Natural killer cell (primary cell): ENCODE measurements at regions of chr1 and their contacts with region 1.

Region 1: DNA sequence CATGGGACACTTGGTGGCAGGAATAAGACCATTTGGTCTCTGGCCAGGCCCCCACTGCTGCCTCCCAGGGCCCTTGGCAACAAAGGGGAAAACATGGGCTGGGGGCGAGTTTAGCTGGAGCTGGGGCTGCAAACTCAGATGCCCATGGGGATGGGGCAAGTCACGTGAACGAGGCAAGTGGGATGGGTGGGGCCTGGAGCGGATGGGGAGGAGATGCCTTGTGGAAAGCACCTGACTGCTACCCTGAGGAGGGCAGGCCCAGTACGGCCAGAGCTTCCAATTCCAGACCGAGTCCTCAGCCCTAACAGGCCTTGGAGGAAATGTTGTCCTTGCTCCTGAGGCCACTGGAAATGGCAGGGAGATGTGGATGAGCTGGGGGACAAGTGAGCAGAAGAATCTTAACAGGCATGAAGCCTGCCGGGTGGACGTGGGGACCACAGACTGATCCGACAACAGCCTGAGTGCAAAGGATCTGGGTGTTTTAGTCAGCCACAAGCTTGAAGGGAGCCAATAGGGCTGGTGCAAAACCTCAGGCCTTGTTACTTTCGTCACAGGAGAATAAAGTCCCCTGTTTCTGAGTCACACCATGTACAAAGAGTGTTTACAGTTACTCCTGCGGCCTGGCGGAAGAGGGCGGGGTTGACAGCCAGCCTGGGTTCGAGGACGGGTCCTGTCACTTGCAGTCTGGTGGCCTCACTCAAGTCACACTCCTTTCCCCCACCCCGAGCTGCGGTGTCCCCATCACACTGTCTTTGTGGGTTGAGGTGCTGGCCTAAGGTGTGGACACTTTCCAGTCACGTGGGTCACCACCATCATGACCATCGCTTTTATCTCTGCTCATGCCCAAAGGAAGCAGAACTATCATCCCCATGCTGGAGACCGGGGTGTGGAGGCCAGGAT is 19.1 kb downstream of the RUNX3 start:
- DNase-seq: peak; percentile 94 to 95
- ATAC-seq: peak; percentile 64 to 84 (median 70)
- H3K4me3 ChIP-seq: peak overlapping the region; percentile 25
- H3K4me3 Mint-ChIP-seq: peak overlapping the region; percentile 83
- H3K27ac ChIP-seq: peak overlapping the region; percentile 100
- H3K27ac Mint-ChIP-seq: peak overlapping the region; percentile 99
- H3K4me1 ChIP-seq: peaks cover 99% of the 10 kb centered on the region
- H3K4me1 Mint-ChIP-seq: peaks cover 89 to 94% of the 10 kb centered on the region in 2 donors
- H3K27me3 ChIP-seq: no peaks in the 10 kb centered on the region
- H3K27me3 Mint-ChIP-seq: no peaks in the 10 kb centered on the region
- CTCF ChIP-seq: no peak

Region 2: DNA sequence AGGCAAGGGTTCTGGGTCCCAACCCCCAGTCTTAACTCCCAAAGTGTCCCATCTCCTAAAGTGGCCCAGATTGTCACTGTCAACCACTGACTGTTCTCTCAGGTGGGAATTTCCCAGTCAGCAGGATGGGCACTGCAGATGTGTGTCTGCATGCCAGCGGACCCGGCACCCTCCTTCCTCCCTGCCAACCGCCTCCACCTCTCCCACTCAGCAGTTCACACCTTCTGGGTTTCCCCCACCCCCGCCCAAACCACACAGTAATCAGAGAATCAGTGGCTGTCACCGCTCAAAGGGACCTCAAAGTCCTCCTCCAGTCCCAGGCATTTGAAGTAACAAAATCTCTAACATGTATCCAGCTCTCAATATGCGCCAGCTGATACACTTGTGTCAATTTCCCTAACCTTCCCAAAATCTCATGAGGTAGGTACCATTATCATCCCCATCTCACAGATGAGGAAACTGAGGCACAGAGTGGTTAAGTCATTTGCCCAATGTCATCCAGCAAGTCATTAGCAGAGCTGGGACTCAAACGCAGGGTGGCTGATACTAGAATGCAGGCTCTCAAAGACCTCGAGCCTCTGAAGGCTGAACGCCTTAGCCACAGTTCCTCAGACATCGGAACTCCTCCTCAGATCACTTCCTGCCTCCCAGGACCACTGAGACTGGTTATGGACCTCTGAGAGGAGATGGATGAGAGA is 14.2 kb after region 1 on chr1:
- intact Hi-C with region 1: loop called (anchors 1 kb)
- DNase-seq: peak; percentile 75 to 97
- ATAC-seq: peak; percentile 40 to 64 (median 61)
- H3K4me3 ChIP-seq: peak overlapping the region; percentile 94
- H3K4me3 Mint-ChIP-seq: peak overlapping the region; percentile 97
- H3K27ac ChIP-seq: peak overlapping the region; percentile 100
- H3K27ac Mint-ChIP-seq: peak overlapping the region; percentile 99
- H3K4me1 ChIP-seq: peaks cover 71% of the 10 kb centered on the region
- H3K4me1 Mint-ChIP-seq: peaks cover 66 to 73% of the 10 kb centered on the region in 2 donors
- H3K27me3 ChIP-seq: no peaks in the 10 kb centered on the region
- H3K27me3 Mint-ChIP-seq: no peaks in the 10 kb centered on the region
- CTCF ChIP-seq: no peak

Region 3: DNA sequence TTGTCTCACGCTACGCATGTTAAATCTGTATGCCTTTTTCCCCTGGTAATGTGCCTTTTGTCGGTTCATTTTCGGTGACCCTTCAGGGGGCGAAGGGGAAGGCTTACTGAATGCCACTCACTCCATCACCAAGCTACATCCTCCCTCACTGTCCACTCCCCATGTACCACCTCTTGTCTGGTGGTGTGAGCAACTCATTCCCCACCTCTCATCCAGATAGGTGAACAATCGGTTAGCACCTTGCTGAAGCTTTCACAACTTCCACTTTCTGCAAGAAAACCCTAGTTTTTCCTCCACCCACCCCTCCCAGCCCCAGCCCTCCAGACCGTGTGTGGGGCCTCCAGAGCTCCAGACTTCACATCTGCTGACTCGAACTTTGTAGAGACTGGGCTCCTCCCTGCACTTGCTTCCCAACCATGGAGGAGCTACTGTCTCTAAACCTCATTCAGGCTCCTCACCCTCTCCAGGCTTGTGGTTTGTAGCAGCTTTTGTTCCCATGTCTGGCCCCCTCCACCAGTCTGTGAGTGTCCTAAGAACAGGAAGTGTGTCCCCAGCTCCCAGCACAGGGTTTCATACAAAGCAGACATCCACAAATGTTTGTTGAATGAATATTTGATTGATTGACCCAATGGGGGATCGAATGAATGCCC is 67.5 kb after region 1 on chr1:
- intact Hi-C with region 1: no loop called
- DNase-seq: no peak
- ATAC-seq: no peak
- H3K4me3 ChIP-seq: no peak overlapping the region
- H3K4me3 Mint-ChIP-seq: no peak overlapping the region
- H3K27ac ChIP-seq: no peak overlapping the region
- H3K27ac Mint-ChIP-seq: no peak overlapping the region
- H3K4me1 ChIP-seq: peaks cover 28% of the 10 kb centered on the region
- H3K4me1 Mint-ChIP-seq: peaks cover 23 to 47% of the 10 kb centered on the region in 2 donors
- H3K27me3 ChIP-seq: peaks cover 4% of the 10 kb centered on the region
- H3K27me3 Mint-ChIP-seq: peaks cover 64 to 68% of the 10 kb centered on the region in 2 donors
- CTCF ChIP-seq: no peak

Region 4: DNA sequence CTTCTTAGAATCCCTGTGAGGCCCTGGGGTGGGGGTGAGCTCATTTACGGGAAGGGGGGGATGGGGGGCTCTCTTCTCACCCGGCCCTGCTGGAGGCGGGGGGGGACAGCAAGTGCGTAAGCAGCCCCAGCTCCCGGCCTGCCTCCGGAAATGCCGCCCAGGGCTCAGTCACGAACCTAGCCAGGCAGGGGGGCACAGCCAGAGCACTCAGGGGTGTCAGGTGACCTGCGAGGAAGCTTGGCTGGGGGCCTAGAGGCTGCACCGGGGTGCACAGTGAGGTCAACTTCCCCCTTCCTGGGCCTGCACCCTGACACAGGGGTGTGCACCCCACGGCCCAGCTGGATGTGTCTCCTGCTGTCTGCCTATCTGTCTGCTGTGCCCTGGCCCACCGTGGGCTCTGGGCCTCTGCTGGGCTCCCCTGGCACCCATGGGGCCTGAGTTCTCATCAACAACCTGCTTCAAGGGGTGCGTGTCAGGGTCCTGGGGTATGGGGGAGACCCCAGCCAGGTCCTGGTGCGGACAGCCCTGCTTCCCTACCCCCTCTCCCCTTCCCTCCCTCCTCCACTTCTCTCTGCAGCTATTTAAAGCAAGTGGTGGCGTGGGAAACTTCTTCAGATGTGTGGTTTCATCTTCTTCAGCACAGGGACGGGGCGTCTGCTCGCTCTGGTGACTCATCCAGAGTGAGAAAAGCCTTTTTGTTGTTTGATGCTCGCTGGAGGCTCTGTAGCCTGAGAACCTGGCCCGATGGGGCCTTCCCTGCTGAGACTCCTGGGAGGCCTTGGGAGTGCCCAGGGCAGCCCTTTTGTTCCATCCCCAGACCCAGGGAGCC is 111.6 kb after region 1 on chr1:
- intact Hi-C with region 1: loop called (anchors 2 kb)
- DNase-seq: peak; percentile 90 to 99
- ATAC-seq: peak; percentile 79 to 94 (median 86)
- H3K4me3 ChIP-seq: peak overlapping the region; percentile 17
- H3K4me3 Mint-ChIP-seq: peak overlapping the region; percentile 85
- H3K27ac ChIP-seq: peak overlapping the region; percentile 100
- H3K27ac Mint-ChIP-seq: peak overlapping the region; percentile 93 to 99
- H3K4me1 ChIP-seq: peaks cover 100% of the 10 kb centered on the region
- H3K4me1 Mint-ChIP-seq: peaks cover 42 to 71% of the 10 kb centered on the region in 2 donors
- H3K27me3 ChIP-seq: no peaks in the 10 kb centered on the region
- H3K27me3 Mint-ChIP-seq: no peaks in the 10 kb centered on the region
- CTCF ChIP-seq: no peak

Region 5: GRCh38 chr1:25065795-25066238 is 154.8 kb after region 1 on chr1:
- intact Hi-C with region 1: loop called (anchors 1 kb)
- DNase-seq: peak; percentile 87 to 91
- ATAC-seq: peak; percentile 75 to 86 (median 85)
- H3K4me3 ChIP-seq: peak overlapping the region; percentile 20
- H3K4me3 Mint-ChIP-seq: peak overlapping the region; percentile 91
- H3K27ac ChIP-seq: peak overlapping the region; percentile 75
- H3K27ac Mint-ChIP-seq: peak overlapping the region; percentile 93 to 95
- H3K4me1 ChIP-seq: peaks cover 79% of the 10 kb centered on the region
- H3K4me1 Mint-ChIP-seq: peaks cover 52 to 71% of the 10 kb centered on the region in 2 donors
- H3K27me3 ChIP-seq: no peaks in the 10 kb centered on the region
- H3K27me3 Mint-ChIP-seq: peaks cover 23 to 24% of the 10 kb centered on the region in 2 donors
- CTCF ChIP-seq: no peak

Region 6: DNA sequence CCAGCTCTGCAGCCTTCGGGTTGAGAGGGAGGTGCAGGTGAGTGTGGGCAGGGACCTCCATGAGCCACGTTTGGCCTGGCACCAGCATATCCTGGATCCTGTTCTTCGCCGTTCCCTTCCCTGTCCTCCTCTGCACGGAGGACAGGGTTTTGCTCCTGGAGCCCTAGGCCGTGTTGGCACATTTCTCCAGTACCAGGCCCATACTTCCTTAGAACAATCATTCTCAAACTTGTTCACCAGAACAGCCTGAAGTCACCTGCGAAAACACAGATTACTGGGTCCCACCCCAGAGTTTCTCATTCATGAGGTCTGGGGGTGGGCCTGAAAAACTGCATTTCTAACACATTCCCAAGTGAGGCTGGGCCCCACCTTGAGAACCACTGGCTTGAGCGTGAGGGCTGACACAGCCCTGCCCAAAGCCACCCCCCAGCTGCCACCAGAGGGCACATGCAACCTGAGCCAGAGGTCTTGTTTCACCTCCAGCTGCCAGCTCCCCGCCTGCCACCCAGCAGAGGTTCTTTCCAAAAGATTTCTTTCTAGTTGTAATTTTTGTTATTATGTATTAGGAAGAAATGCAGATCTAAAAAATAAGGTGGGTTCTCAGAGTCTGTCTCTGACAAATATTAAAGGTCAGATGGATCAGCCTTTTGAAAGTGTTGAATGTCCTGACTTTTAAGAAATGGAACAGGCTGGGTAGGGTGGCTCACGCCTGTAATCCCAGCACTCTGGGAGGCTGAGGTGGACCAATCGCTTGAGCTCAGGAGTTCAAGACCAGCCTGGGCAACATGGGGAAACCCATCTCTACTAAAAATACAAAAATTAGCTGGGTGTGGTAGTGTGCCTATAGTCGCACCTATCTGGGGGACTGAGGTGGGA is 592.8 kb after region 1 on chr1:
- intact Hi-C with region 1: no loop called
- DNase-seq: peak; percentile 28 to 83
- ATAC-seq: peak; percentile 58 to 65 (median 64)
- H3K4me3 ChIP-seq: no peak overlapping the region
- H3K4me3 Mint-ChIP-seq: no peak overlapping the region
- H3K27ac ChIP-seq: no peak overlapping the region
- H3K27ac Mint-ChIP-seq: no peak overlapping the region
- H3K4me1 ChIP-seq: no peaks in the 10 kb centered on the region
- H3K4me1 Mint-ChIP-seq: no peaks in the 10 kb centered on the region
- H3K27me3 ChIP-seq: no peaks in the 10 kb centered on the region
- H3K27me3 Mint-ChIP-seq: peaks cover 0 to 7% of the 10 kb centered on the region in 2 donors
- CTCF ChIP-seq: peak; percentile 40